ENCODE measurements at regions of chr11 and their contacts with region 1.

Region 1: GRCh38 chr11:62841361-62842184 is 2.2 kb upstream of the WDR74 start:
- DNase-seq: peak; percentile 92
- ATAC-seq: peak; percentile 74
- H3K4me3 Mint-ChIP-seq: no peak overlapping the region
- H3K27ac Mint-ChIP-seq: no peak overlapping the region
- H3K4me1 Mint-ChIP-seq: peaks cover 20% of the 10 kb centered on the region
- H3K27me3 Mint-ChIP-seq: no peaks in the 10 kb centered on the region

Region 2: DNA sequence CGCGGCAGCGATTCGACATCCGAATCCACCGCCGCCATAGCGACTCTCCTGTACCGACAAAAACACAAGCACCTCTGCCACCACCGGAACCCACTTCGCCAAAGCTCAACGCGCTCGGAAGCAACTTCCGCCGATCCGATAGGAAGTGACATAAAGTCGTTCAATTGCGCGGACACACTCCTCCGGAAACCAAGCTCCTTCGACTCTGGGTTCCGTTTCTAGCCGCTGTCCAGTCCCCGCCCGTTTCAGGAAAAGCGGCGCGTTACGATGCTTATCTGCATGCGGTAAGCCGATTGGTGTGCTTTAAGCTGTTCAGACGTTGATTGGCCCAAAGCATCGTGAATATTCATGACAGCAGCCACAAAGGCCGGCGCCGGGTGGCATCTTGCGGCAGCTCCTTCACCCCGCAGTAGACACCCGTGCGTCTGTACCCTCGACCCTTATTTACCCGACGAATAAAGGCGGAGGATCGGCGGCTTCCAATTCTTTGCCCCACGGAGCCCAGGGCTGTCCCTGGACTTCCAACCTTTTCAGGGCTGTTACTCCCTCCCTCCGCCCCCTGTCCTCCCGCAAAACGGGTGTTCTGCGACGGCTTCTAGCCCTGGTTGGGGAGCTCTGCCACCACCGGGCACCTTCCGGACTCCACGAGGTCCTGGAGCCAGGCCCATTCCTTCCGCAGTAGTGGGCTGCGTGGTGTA is 250.0 kb before region 1 on chr11 and contains the start of gene TUT1:
- CTCF ChIA-PET with region 1: no interaction called
- POLR2A ChIA-PET with region 1: interaction called, 35 read pairs
- DNase-seq: peak; percentile 99
- ATAC-seq: peak; percentile 88
- H3K4me3 Mint-ChIP-seq: peak within 1 kb of the TSS; percentile 91
- H3K27ac Mint-ChIP-seq: peak within 1 kb of the TSS; percentile 93
- H3K4me1 Mint-ChIP-seq: peaks cover 55% of the 10 kb centered on the region
- H3K27me3 Mint-ChIP-seq: no peaks in the 10 kb centered on the region
- total RNA-seq, gene TUT1: 22.2 to 25.0 TPM

Region 3: GRCh38 chr11:62671575-62672389 is 169.8 kb before region 1 on chr11 and contains the starts of genes LBHD1 and UQCC3:
- CTCF ChIA-PET with region 1: interaction called, 3 read pairs
- POLR2A ChIA-PET with region 1: interaction called, 36 read pairs
- DNase-seq: peak; percentile 81
- ATAC-seq: peak; percentile 85
- H3K4me3 Mint-ChIP-seq: peak within 1 kb of the TSS; percentile 99
- H3K27ac Mint-ChIP-seq: peak within 1 kb of the TSS; percentile 99
- H3K4me1 Mint-ChIP-seq: peaks cover 67% of the 10 kb centered on the region
- H3K27me3 Mint-ChIP-seq: no peaks in the 10 kb centered on the region
- total RNA-seq, gene LBHD1: 22.3 to 25.0 TPM
- total RNA-seq, gene UQCC3: 7.5 TPM

Region 4: DNA sequence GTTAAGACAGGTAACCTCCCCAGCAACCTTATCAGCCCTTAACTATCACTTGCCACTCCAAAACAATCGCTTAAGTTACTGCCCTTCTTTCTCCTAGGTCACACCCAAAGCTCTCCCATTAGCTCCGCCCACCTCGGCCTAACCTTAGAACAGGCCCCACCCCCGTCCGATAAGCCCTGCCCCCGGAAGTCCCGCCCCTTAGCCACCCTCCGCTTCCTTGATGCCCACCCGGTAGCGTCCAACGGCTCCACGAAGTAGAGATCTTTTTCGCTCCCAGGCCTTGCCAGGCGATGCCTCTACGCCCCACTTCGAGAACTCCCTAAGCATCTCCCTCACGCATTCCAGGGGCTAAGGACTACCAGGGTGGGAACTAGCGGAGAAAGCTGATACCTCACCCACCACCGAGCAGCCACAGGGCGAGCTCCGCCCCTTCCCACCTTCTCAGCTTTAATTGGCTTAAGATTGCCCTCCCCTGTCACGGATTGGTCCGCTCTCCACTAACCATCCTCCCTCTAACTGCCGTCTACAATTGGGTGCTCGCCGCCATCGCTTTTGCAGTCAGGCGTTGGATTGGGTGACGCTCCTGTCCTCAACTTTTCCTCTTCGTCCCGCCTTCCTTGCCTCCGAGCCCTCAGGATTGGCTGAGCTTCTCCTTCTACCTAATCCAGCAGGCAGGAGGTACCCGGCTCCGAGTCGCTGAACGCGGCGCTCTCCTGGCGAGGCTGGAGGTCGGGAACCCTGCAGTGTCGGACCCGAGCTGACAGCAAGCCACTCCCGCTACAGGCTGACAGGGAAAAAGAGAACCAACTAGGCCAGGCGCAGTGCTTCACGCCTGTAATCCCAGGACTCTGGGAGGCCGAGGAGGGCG is 87.6 kb before region 1 on chr11 and contains the start of gene ZBTB3:
- CTCF ChIA-PET with region 1: no interaction called
- POLR2A ChIA-PET with region 1: interaction called, 48 read pairs
- DNase-seq: peak; percentile 99
- ATAC-seq: peak; percentile 99
- H3K4me3 Mint-ChIP-seq: peak within 1 kb of the TSS; percentile 94
- H3K27ac Mint-ChIP-seq: peak within 1 kb of the TSS; percentile 97
- H3K4me1 Mint-ChIP-seq: peaks cover 31% of the 10 kb centered on the region
- H3K27me3 Mint-ChIP-seq: no peaks in the 10 kb centered on the region
- total RNA-seq, gene ZBTB3: 12.4 to 12.8 TPM

Region 5: GRCh38 chr11:62799486-62799885 is 42.1 kb before region 1 on chr11:
- CTCF ChIA-PET with region 1: interaction called, 3 read pairs
- POLR2A ChIA-PET with region 1: interaction called, 31 read pairs
- DNase-seq: no peak
- ATAC-seq: no peak
- H3K4me3 Mint-ChIP-seq: no peak overlapping the region
- H3K27ac Mint-ChIP-seq: no peak overlapping the region
- H3K4me1 Mint-ChIP-seq: peaks cover 18% of the 10 kb centered on the region
- H3K27me3 Mint-ChIP-seq: no peaks in the 10 kb centered on the region

Region 6: DNA sequence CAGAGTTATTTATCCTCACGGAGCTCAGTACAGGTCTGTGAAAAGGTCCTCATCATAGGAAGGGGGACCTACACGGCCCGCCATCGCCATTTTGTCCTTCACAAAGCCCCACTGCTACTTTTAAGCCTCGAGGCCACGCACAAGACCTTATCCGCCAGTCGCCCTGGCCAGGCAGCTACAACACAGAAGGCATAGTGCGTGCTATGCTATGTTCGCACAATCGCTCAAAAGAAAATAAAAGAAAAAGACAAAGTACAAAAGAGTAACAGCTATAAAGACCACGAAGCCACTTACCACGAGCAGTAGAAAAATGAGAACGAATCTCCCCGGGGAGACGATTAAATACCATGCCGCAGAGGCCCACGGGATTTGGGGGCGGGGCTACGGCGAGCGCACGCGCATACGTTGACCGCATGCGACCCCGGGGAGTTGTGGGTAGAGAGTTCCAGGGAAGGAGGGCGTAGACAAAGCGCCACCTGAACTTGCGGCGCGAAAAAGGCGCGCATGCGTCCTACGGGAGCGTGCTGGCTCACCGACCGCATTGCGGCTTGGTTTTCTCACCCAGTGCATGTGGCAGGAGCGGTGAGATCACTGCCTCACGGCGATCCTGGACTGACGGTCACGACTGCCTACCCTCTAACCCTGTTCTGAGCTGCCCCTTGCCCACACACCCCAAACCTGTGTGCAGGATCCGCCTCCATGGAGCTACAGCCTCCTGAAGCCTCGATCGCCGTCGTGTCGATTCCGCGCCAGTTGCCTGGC is 14.2 kb after region 1 on chr11:
- CTCF ChIA-PET with region 1: interaction called, 11 read pairs
- POLR2A ChIA-PET with region 1: interaction called, 507 read pairs
- DNase-seq: peak; percentile 99
- ATAC-seq: peak; percentile 85
- H3K4me3 Mint-ChIP-seq: peak overlapping the region; percentile 99
- H3K27ac Mint-ChIP-seq: peak overlapping the region; percentile 98
- H3K4me1 Mint-ChIP-seq: peaks cover 69% of the 10 kb centered on the region
- H3K27me3 Mint-ChIP-seq: no peaks in the 10 kb centered on the region

Measured in activated CD8-positive, alpha-beta T cell treated with anti-CD3 and anti-CD28 coated beads, Interleukin-2, amount 10 ng/mL, durations not matched to agents 7 days and 5 days (primary cell).